ENCODE measurements at regions of chr13 and their contacts with region 1.

Region 1: DNA sequence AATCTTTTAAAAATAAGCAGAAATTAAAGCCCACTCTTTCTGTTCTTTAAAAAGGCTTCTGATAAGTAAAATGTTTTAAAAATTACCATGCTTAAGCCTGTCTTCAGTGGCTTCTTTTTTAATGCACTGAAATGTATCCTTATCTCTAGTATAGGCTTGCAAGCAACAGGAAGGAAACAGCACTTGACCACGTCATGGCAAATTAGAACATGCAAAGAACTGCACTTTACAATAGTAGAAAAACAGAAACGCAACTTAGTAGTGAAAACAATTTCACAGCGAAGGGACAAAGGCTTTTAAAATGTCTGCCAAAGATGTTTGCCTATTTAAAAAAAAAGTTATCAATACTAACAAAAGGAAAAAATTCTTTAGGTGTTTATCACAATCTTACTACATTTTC is 36.3 kb downstream of the ELF1 start:
- DNase-seq: no peak
- ATAC-seq: peak; percentile 62
- H3K4me3 Mint-ChIP-seq: peak overlapping the region; percentile 90
- H3K27ac Mint-ChIP-seq: peak overlapping the region; percentile 92
- H3K4me1 Mint-ChIP-seq: peaks cover 60% of the 10 kb centered on the region
- H3K27me3 Mint-ChIP-seq: no peaks in the 10 kb centered on the region

Region 2: DNA sequence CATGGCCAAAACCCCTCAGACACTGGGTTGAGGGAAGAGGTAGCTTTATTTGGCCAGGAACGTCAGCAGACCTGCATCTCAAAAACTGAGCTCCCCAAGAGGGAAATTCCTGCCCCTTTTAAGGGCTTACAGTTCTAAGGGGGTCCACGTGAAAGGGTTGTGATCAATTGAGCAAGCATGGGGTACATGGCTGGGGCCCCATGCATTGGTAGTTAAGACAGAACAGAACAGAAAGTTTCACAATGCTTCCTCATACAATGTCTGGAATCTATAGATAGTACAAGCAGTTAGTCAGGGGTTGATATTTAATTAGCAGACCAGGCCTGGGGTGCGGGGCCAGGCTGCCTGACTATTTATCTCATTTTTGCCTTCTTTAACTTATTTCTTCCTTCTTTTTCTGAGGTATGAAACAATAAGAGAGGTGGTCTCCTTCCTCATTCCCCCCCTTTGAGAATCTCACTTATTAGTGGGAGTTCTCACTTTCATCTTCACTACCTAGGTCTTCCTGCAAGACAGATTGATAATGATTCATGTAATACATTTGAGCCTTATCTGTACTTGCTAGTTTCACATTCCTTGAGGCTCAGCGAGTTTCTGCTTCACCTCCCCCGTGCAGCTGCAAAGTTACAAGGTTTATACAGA is 108.5 kb before region 1 on chr13:
- POLR2A ChIA-PET with region 1: no interaction called
- DNase-seq: no peak
- ATAC-seq: no peak
- H3K4me3 Mint-ChIP-seq: no peak overlapping the region
- H3K27ac Mint-ChIP-seq: no peak overlapping the region
- H3K4me1 Mint-ChIP-seq: no peaks in the 10 kb centered on the region
- H3K27me3 Mint-ChIP-seq: no peaks in the 10 kb centered on the region

Region 3: DNA sequence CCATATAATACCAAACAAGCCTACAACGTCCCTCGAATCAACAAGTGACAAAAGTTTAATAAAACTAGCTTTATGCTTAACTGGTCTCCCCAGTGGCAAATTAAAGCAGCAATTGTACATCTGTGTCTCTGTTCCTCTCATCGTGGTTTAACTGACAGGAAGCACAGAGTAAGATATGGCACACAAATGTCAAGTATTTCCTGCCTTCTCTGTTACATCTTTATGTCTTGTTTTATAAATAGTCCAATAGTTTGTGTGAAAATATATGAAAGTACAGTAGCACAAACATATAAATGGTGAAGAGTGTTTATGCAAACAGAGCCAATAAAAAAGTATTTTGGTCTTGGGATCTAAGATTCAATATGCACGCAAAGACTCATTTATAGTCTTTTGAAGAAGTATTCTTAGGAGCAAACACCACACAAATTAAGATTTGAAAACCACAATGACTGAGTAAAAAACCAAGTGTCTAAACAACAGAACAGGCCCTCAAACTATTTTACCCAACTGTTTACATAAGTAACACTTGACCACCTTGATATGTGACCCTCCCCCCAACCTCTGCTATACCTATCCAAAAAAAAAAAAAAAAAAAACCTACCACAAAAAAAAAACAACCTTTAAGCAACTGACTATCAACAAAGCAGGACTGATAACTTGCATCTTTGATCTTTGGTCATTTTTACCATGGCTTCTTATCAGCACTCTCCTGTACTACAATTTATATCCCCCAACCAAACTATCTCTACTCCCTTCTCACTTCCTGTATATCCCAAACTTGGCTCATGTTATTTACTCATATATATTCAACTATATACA is 22.3 kb after region 1 on chr13:
- POLR2A ChIA-PET with region 1: interaction called, 18 read pairs
- DNase-seq: no peak
- ATAC-seq: peak; percentile 79
- H3K4me3 Mint-ChIP-seq: peak overlapping the region; percentile 74
- H3K27ac Mint-ChIP-seq: peak overlapping the region; percentile 85
- H3K4me1 Mint-ChIP-seq: peaks cover 57% of the 10 kb centered on the region
- H3K27me3 Mint-ChIP-seq: no peaks in the 10 kb centered on the region

Region 4: DNA sequence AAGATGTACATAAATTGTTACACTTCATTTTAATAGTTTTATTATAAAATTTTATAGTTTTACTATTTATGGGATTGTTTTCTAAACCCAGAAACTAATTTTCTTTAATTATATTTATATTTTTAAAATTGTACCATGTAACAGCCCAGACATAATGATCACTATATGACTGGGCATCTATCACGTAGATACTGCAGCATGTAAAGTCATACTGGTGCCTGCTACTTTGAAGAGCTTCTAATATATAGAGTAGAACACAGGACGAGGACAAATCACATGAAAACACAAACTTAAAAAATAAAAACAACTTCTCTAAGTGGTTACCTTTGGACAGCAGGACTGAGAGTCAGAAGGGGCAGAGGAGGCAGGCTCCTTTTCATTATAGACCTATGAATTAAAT is 31.1 kb after region 1 on chr13:
- POLR2A ChIA-PET with region 1: interaction called, 39 read pairs
- DNase-seq: no peak
- ATAC-seq: no peak
- H3K4me3 Mint-ChIP-seq: peak overlapping the region; percentile 91
- H3K27ac Mint-ChIP-seq: peak overlapping the region; percentile 78
- H3K4me1 Mint-ChIP-seq: peaks cover 45% of the 10 kb centered on the region
- H3K27me3 Mint-ChIP-seq: no peaks in the 10 kb centered on the region

Region 5: DNA sequence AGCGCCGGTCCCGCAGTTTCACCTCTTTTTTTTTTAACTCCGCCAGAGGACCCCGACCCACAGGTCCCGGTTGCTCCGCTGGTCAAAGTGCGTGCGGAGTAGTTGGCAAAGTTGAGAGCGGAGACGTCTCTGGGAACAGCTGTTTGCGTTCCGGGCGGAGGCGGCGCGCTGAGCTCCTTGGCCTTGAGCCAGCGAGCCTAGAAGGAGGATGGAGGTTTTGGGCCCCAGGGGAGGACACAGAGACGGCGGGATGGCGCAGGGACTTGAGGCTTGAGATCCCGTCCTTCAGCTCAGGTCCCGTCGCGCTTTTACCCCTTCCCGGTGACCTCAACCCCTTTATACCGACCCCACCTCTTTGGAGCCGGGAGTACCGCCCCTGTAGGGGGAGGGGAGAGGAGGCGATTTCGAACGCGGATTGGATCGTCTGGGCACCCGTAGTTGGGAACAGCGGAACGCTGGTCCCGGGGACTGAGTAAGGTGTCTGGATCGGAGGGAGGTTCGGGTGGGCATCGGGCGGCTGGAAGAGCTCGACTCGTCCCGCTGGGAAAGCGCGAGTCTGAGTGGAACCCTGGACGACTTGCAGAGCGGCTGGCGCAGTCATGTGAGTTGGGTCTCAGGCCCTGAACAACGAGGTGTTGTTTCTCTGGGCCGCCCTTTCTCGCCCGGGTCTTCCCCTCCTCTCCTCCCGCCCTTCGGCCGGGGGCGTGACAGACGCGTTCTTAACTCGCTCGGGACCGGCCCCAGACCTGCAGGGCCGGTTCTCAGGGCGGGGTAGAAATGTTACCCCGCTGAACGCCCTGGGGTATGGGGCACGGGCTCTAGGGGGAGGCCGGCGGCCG is 78.5 kb after region 1 on chr13 and contains the start of gene WBP4:
- POLR2A ChIA-PET with region 1: interaction called, 11 read pairs
- DNase-seq: peak; percentile 90
- ATAC-seq: peak; percentile 77
- H3K4me3 Mint-ChIP-seq: peak within 1 kb of the TSS; percentile 97
- H3K27ac Mint-ChIP-seq: peak within 1 kb of the TSS; percentile 96
- H3K4me1 Mint-ChIP-seq: peaks cover 49% of the 10 kb centered on the region
- H3K27me3 Mint-ChIP-seq: no peaks in the 10 kb centered on the region
- total RNA-seq, gene WBP4: 9.3 to 9.9 TPM

Region 6: GRCh38 chr13:41492404-41493260 is 509.9 kb after region 1 on chr13:
- POLR2A ChIA-PET with region 1: no interaction called
- DNase-seq: no peak
- ATAC-seq: peak; percentile 67
- H3K4me3 Mint-ChIP-seq: peak overlapping the region; percentile 69
- H3K27ac Mint-ChIP-seq: peak overlapping the region; percentile 93
- H3K4me1 Mint-ChIP-seq: peaks cover 49% of the 10 kb centered on the region
- H3K27me3 Mint-ChIP-seq: no peaks in the 10 kb centered on the region

Region 7: GRCh38 chr13:41767801-41768200 is 785.0 kb after region 1 on chr13:
- POLR2A ChIA-PET with region 1: no interaction called
- DNase-seq: no peak
- ATAC-seq: no peak
- H3K4me3 Mint-ChIP-seq: no peak overlapping the region
- H3K27ac Mint-ChIP-seq: no peak overlapping the region
- H3K4me1 Mint-ChIP-seq: peaks cover 7% of the 10 kb centered on the region
- H3K27me3 Mint-ChIP-seq: no peaks in the 10 kb centered on the region

Measured in activated naive CD8-positive, alpha-beta T cell treated with anti-CD3 and anti-CD28 coated beads, Interleukin-2, amount 10 ng/mL, durations not matched to agents 7 days and 5 days (primary cell).